A673 (cell line): ENCODE measurements at regions of chr7 and their contacts with region 1.

Region 1: GRCh38 chr7:44521347-44522095 is 19.6 kb downstream of the NPC1L1 start:
- DNase-seq: no peak
- H3K4me3 ChIP-seq: no peak overlapping the region
- H3K27ac ChIP-seq: no peak overlapping the region
- H3K4me1 ChIP-seq: no peaks in the 10 kb centered on the region
- H3K27me3 ChIP-seq: no peaks in the 10 kb centered on the region
- CTCF ChIP-seq: no peak

Region 2: DNA sequence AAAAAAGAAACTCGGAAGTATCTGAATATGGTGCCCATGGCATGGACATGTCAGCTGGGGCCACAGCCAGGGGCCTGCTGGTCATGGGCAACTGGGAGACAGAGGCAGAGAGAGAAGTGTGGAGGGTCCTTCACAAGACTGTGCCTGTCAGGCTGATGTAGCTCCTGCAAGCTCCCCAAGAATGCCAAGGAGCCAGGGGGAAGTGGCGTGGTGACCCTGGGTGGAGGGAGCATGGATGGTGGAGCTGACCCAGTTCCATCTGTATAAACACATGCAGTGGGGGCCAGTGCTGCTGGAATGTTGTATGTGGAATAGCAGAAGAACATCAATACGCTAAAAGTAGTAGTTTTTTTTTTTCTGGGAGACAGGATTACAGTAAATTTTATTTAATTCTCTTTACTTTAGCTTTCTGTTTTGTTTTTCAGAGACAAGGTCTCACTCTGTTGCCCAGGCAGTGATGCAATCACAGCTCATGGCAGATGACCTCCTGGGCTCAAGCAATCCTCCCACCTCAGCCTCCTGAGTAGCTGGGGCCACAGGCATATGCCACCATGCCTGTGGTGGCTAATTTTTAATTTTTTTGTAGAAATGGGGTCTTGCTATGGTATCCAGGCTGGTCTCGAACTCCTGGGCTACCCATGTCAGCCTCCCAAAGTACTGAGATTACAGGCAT is 216.7 kb after region 1 on chr7:
- CTCF ChIA-PET with region 1: no interaction called
- POLR2A ChIA-PET with region 1: interaction called, 11 read pairs
- intact Hi-C with region 1: no loop called
- DNase-seq: no peak
- H3K4me3 ChIP-seq: no peak overlapping the region
- H3K27ac ChIP-seq: no peak overlapping the region
- H3K4me1 ChIP-seq: no peaks in the 10 kb centered on the region
- H3K27me3 ChIP-seq: no peaks in the 10 kb centered on the region
- CTCF ChIP-seq: no peak